ENCODE measurements at regions of chr17 and their contacts with region 1.

Region 1: DNA sequence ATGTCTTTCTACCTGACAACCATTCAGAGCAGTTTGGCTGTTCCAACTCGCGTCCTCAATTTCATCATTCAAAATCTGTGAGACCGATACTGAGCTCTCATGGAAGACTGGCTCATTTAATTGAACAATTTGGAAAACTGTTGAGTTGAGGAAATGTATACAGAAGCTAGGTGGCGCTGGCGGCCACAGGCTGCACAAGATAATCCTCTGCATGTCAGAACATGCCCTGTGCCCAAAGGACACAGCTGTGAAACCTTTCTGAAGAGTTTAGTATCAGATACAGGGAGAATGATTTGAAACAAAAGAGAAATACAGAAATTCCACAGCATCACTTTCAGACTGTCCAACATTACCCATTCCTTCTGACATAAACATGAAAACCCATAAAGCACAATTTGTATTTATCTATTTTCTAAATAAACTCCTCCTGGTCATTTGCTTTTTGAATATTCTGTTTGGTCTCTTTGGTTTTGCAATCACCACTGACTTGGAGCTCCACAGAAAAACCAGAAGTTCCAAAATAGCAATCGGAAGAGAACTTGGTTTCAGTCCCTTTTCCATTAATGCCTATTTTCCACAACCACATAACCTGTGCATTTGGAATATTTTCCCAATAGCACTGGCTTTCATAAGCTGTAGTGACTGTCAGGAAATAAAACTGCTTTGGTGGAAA is 192.8 kb downstream of the MAP2K6 start:
- DNase-seq: peak; percentile 25 to 70
- H3K4me3 ChIP-seq: no peak overlapping the region
- H3K27ac ChIP-seq: peak overlapping the region; percentile 51
- H3K4me1 ChIP-seq: peaks cover 0 to 3% (median 1%) of the 10 kb centered on the region in 4 experiments; a peak in 3 of 7 replicates
- H3K27me3 ChIP-seq: no peaks in the 10 kb centered on the region
- CTCF ChIP-seq: peak; percentile 69 to 85 (median 72)
- EP300 ChIP-seq: no peak
- POLR2A ChIP-seq: no peak
- RAD21 ChIP-seq: peak; percentile 86

Region 2: DNA sequence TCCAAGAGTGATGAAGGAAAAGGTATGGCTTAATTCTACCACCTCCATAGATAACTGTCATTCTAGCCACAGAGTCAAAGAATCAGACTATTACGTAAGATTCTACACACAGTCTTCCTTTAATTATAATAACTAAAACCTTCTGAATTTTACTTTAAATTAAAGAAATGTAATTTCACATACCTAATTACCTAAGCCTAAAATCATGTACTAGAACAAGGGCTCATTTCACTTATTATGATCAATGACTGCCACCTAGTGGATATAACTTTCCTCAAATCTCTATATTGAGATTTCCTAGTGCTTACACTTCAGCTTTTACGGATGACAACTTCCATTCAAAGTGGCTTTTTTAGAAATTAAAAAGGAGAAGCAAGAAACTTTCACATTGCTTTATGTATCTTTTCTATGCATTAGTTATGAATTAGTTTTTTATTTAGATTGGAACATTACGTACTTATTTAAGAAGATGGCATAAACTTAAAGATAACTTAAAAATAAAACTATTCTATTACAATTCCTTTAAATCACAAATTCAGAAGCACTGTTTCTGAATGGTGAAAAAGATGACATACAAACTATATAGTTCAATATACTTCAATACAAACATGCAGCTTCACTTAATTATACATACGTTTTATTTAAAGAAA is 360.4 kb before region 1 on chr17:
- CTCF ChIA-PET with region 1: no interaction called
- POLR2A ChIA-PET with region 1: no interaction called
- DNase-seq: no peak
- H3K4me3 ChIP-seq: no peak overlapping the region
- H3K27ac ChIP-seq: no peak overlapping the region
- H3K4me1 ChIP-seq: no peaks in the 10 kb centered on the region
- H3K27me3 ChIP-seq: no peaks in the 10 kb centered on the region
- CTCF ChIP-seq: peak in 2 of 3 experiments; percentile 34 to 51; a peak in 2 of 4 replicates
- EP300 ChIP-seq: no peak
- POLR2A ChIP-seq: no peak
- RAD21 ChIP-seq: peak; percentile 60 to 66

Region 3: GRCh38 chr17:69539781-69540319 is 67.4 kb before region 1 on chr17:
- CTCF ChIA-PET with region 1: no interaction called
- POLR2A ChIA-PET with region 1: no interaction called
- DNase-seq: no peak
- H3K4me3 ChIP-seq: no peak overlapping the region
- H3K27ac ChIP-seq: no peak overlapping the region
- H3K4me1 ChIP-seq: no peaks in the 10 kb centered on the region
- H3K27me3 ChIP-seq: no peaks in the 10 kb centered on the region
- CTCF ChIP-seq: no peak
- EP300 ChIP-seq: no peak
- POLR2A ChIP-seq: no peak
- RAD21 ChIP-seq: no peak

Region 4: GRCh38 chr17:69574257-69575197 is 32.8 kb before region 1 on chr17:
- CTCF ChIA-PET with region 1: interaction called, 11 read pairs
- POLR2A ChIA-PET with region 1: no interaction called
- DNase-seq: no peak
- H3K4me3 ChIP-seq: no peak overlapping the region
- H3K27ac ChIP-seq: no peak overlapping the region
- H3K4me1 ChIP-seq: peaks cover 0 to 7% (median 6%) of the 10 kb centered on the region in 4 experiments; a peak in 3 of 7 replicates
- H3K27me3 ChIP-seq: no peaks in the 10 kb centered on the region
- CTCF ChIP-seq: no peak
- EP300 ChIP-seq: no peak
- POLR2A ChIP-seq: no peak
- RAD21 ChIP-seq: no peak

Region 5: GRCh38 chr17:69581061-69581961 is 26.0 kb before region 1 on chr17:
- CTCF ChIA-PET with region 1: interaction called, 21 read pairs
- POLR2A ChIA-PET with region 1: no interaction called
- DNase-seq: no peak
- H3K4me3 ChIP-seq: no peak overlapping the region
- H3K27ac ChIP-seq: no peak overlapping the region
- H3K4me1 ChIP-seq: no peaks in the 10 kb centered on the region
- H3K27me3 ChIP-seq: no peaks in the 10 kb centered on the region
- CTCF ChIP-seq: no peak
- EP300 ChIP-seq: no peak
- POLR2A ChIP-seq: no peak
- RAD21 ChIP-seq: no peak

Region 6: DNA sequence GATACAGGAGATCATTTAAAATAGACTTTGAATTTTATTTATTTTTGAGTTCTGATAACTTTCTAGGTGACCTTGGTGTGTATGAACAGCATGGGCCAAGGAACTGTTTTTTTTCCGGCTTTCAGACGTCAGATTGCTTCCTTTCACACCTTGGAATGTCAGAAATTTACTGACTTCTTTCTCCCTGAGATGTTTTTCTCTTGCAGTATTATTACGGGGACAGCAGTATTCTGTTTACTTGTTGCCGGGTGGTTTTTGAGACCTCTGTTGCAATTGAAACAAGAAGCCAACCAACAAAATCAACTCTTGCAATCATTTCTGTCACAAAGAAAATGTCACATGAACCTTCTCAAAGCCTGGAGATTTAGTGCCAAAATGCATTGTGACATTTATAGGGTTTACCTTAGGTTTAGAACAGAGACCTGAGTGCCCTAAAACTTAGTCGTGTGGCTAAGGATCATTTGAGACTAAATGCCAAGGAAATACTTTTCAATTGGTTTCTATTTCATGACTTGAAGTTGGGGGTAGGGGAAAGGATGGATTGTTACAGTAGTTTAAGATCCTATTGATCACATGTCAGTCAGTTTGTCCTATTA is 18.5 kb before region 1 on chr17:
- CTCF ChIA-PET with region 1: interaction called, 59 read pairs
- POLR2A ChIA-PET with region 1: no interaction called
- DNase-seq: no peak
- H3K4me3 ChIP-seq: no peak overlapping the region
- H3K27ac ChIP-seq: no peak overlapping the region
- H3K4me1 ChIP-seq: no peaks in the 10 kb centered on the region
- H3K27me3 ChIP-seq: no peaks in the 10 kb centered on the region
- CTCF ChIP-seq: no peak
- EP300 ChIP-seq: no peak
- POLR2A ChIP-seq: no peak
- RAD21 ChIP-seq: no peak

Region 7: GRCh38 chr17:69637446-69638156 is 30.3 kb after region 1 on chr17:
- CTCF ChIA-PET with region 1: interaction called, 17 read pairs
- POLR2A ChIA-PET with region 1: no interaction called
- DNase-seq: no peak
- H3K4me3 ChIP-seq: no peak overlapping the region
- H3K27ac ChIP-seq: no peak overlapping the region
- H3K4me1 ChIP-seq: no peaks in the 10 kb centered on the region
- H3K27me3 ChIP-seq: no peaks in the 10 kb centered on the region
- CTCF ChIP-seq: no peak
- EP300 ChIP-seq: no peak
- POLR2A ChIP-seq: no peak
- RAD21 ChIP-seq: no peak

Region 8: GRCh38 chr17:69651921-69652320 is 44.6 kb after region 1 on chr17:
- CTCF ChIA-PET with region 1: interaction called, 10 read pairs
- POLR2A ChIA-PET with region 1: no interaction called
- DNase-seq: no peak
- H3K4me3 ChIP-seq: no peak overlapping the region
- H3K27ac ChIP-seq: no peak overlapping the region
- H3K4me1 ChIP-seq: no peaks in the 10 kb centered on the region
- H3K27me3 ChIP-seq: no peaks in the 10 kb centered on the region
- CTCF ChIP-seq: no peak
- EP300 ChIP-seq: no peak
- POLR2A ChIP-seq: no peak
- RAD21 ChIP-seq: no peak

Region 9: DNA sequence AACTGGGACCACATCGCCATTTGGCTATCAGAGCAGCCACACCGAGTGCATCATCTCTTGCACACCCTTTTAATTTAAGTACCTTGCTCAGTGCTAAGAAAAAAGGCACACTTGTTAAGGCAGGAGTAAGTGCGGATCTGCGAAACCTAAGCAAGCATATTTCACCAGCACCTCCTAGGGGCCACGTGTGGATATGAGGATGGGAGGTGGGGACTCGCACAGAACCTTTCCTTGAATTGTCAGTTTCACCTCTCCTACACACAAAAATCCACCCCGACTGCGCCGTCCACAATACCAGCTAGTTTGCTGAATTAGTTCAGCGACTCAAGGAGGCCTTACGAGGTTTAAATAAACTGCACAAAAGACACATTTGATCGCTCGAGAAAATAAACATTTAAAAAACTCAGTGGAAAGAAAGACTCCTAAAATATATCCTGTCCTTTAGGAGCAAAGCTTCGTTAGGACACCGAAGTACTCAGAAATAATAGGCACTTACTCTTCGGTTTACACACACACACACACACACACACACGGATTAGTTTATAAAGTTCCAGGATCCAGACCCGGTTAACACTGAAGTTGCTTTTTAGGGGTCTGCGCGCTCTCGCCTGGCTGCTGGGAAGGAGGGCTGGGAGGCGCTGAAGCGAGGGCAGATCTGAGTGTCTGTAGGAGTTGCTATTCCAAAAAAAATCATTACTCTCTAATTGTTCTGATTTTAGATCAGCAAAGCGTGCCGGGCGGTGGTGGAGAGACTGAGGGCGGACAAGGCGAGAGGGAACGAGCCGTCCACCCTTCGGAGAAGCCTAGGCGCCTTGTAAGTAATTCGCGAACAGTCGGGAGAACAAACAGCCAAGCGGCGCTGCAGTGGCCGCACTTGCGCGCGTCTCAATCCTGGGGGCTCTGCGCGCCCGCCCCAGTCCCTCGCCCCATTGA is 561.0 kb after region 1 on chr17:
- CTCF ChIA-PET with region 1: interaction called, 13 read pairs
- POLR2A ChIA-PET with region 1: no interaction called
- DNase-seq: peak; percentile 10 to 65
- H3K4me3 ChIP-seq: peak overlapping the region; percentile 78 to 84 (median 84)
- H3K27ac ChIP-seq: no peak overlapping the region
- H3K4me1 ChIP-seq: no peaks in the 10 kb centered on the region; a peak in 2 of 7 replicates
- H3K27me3 ChIP-seq: peaks cover 0 to 29% (median 13%) of the 10 kb centered on the region in 4 experiments; a peak in 5 of 7 replicates
- CTCF ChIP-seq: peak; percentile 48 to 86 (median 75)
- EP300 ChIP-seq: no peak
- POLR2A ChIP-seq: no peak
- RAD21 ChIP-seq: peak; percentile 71 to 77

Measured in H1 (cell line).